ENCODE measurements at regions of chr3 and their contacts with region 1.

Region 1: GRCh38 chr3:32177702-32178198 is 60.7 kb upstream of the CMTM8 start:
- DNase-seq: peak; percentile 72
- ATAC-seq: peak; percentile 74
- H3K4me3 Mint-ChIP-seq: no peak overlapping the region
- H3K27ac Mint-ChIP-seq: no peak overlapping the region
- H3K4me1 Mint-ChIP-seq: peaks cover 7% of the 10 kb centered on the region
- H3K27me3 Mint-ChIP-seq: peaks cover 8% of the 10 kb centered on the region
- CTCF ChIP-seq: peak; percentile 56

Region 2: DNA sequence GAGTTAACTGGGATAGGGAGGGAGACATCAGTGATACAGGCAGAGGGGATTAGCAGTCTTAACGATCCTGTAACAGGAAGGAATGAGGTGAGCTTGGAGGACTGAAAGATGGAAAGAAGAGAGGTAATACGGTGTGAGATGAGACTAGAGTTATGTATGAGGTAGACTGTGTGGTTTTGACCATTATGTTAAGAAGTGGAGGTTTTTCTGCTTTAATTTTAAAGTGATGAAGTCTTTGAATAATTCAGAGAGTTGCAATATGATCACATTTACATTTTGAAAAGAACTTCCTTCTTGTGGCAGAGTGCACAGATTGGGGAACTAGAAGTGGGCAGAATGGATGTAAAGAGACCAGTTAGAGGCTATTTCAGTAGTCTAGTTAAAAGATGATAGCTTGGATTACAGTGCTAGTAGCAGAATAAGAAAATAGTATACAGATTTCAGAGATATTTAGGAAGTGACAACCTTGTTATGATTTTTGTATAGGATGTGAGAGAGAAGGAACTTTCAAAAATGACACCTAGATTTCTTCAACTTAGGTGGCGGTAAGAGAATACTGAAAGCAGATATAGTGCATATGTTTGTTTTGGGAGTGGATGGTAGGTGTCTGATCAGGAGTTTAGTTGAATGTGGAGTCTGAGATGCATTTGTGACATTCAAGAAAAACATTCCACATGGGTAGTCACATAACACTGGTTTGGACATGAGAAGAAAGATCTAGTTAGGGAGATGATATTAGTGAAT is 604.5 kb before region 1 on chr3:
- CTCF ChIA-PET with region 1: no interaction called
- POLR2A ChIA-PET with region 1: no interaction called
- intact Hi-C with region 1: no loop called
- DNase-seq: no peak
- ATAC-seq: no peak
- H3K4me3 Mint-ChIP-seq: no peak overlapping the region
- H3K27ac Mint-ChIP-seq: no peak overlapping the region
- H3K4me1 Mint-ChIP-seq: peaks cover 64% of the 10 kb centered on the region
- H3K27me3 Mint-ChIP-seq: no peaks in the 10 kb centered on the region
- CTCF ChIP-seq: no peak

Region 3: GRCh38 chr3:32160706-32161214 is 17.0 kb before region 1 on chr3:
- CTCF ChIA-PET with region 1: interaction called, 12 read pairs
- POLR2A ChIA-PET with region 1: no interaction called
- intact Hi-C with region 1: no loop called
- DNase-seq: no peak
- ATAC-seq: no peak
- H3K4me3 Mint-ChIP-seq: no peak overlapping the region
- H3K27ac Mint-ChIP-seq: no peak overlapping the region
- H3K4me1 Mint-ChIP-seq: no peaks in the 10 kb centered on the region
- H3K27me3 Mint-ChIP-seq: no peaks in the 10 kb centered on the region
- CTCF ChIP-seq: no peak

Region 4: GRCh38 chr3:32238453-32239306 is 60.9 kb after region 1 on chr3 and contains the start of gene CMTM8:
- CTCF ChIA-PET with region 1: interaction called, 35 read pairs
- POLR2A ChIA-PET with region 1: no interaction called
- intact Hi-C with region 1: loop called (anchors 5 kb)
- DNase-seq: peak; percentile 59
- ATAC-seq: peak; percentile 85
- H3K4me3 Mint-ChIP-seq: peak within 1 kb of the TSS; percentile 79
- H3K27ac Mint-ChIP-seq: no peak within 1 kb of the TSS
- H3K4me1 Mint-ChIP-seq: peaks cover 20% of the 10 kb centered on the region
- H3K27me3 Mint-ChIP-seq: peaks cover 18% of the 10 kb centered on the region
- CTCF ChIP-seq: no peak
- total RNA-seq, gene CMTM8: 6.4 to 6.9 TPM

Region 5: DNA sequence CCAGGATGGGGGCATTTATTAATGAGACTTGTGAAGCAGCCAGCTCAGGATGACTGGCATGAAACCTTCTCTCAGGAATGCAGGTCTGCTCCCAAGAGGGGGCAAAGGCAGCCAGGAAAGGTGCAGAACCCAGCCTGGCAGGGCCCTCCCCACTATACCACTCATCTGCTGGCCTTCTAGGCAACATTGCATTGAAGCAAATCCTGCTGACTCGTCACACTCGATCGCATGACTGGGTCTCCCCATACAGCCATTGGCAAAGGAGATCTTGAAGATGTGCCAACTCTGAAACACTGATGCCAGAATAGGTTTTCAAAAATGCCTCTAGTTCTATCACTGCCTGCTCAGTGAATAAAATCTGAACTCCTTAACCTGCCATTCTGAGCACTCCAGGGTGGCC is 148.2 kb after region 1 on chr3:
- CTCF ChIA-PET with region 1: interaction called, 10 read pairs
- POLR2A ChIA-PET with region 1: no interaction called
- intact Hi-C with region 1: no loop called
- DNase-seq: no peak
- ATAC-seq: no peak
- H3K4me3 Mint-ChIP-seq: no peak overlapping the region
- H3K27ac Mint-ChIP-seq: no peak overlapping the region
- H3K4me1 Mint-ChIP-seq: no peaks in the 10 kb centered on the region
- H3K27me3 Mint-ChIP-seq: no peaks in the 10 kb centered on the region
- CTCF ChIP-seq: no peak

Region 6: DNA sequence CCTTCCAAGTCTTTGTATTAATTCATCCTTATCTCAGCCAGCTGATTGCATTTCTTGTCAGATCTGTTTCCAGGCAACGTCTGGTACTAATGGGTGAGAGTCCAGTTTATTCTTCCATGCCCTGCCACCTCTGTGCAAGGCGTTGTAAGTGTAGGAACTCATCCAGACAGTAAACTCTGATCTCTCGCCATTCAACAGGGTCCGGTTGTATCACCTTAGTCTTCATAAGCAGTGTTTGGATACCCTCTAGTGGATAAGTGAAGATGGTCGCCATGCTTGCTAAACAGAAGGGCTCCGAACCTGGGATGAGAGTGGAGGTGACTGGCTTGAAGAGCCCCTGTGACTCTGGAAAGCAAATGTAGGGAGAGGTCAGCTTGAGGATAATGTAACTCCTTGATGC is 162.3 kb after region 1 on chr3:
- CTCF ChIA-PET with region 1: interaction called, 14 read pairs
- POLR2A ChIA-PET with region 1: no interaction called
- intact Hi-C with region 1: loop called (anchors 5 kb)
- DNase-seq: peak; percentile 23
- ATAC-seq: peak; percentile 76
- H3K4me3 Mint-ChIP-seq: no peak overlapping the region
- H3K27ac Mint-ChIP-seq: no peak overlapping the region
- H3K4me1 Mint-ChIP-seq: peaks cover 11% of the 10 kb centered on the region
- H3K27me3 Mint-ChIP-seq: no peaks in the 10 kb centered on the region
- CTCF ChIP-seq: peak; percentile 35

Region 7: GRCh38 chr3:32401556-32402081 is 223.9 kb after region 1 on chr3:
- CTCF ChIA-PET with region 1: interaction called, 4 read pairs
- POLR2A ChIA-PET with region 1: no interaction called
- intact Hi-C with region 1: loop called (anchors 2 kb)
- DNase-seq: peak; percentile 78
- ATAC-seq: peak; percentile 77
- H3K4me3 Mint-ChIP-seq: peak overlapping the region; percentile 91
- H3K27ac Mint-ChIP-seq: peak overlapping the region; percentile 100
- H3K4me1 Mint-ChIP-seq: peaks cover 71% of the 10 kb centered on the region
- H3K27me3 Mint-ChIP-seq: no peaks in the 10 kb centered on the region
- CTCF ChIP-seq: no peak

Measured in activated CD8-positive, alpha-beta T cell treated with anti-CD3 and anti-CD28 coated beads for 36 hours (primary cell).